ENCODE measurements at regions of chr7 and their contacts with region 1.

Region 1: DNA sequence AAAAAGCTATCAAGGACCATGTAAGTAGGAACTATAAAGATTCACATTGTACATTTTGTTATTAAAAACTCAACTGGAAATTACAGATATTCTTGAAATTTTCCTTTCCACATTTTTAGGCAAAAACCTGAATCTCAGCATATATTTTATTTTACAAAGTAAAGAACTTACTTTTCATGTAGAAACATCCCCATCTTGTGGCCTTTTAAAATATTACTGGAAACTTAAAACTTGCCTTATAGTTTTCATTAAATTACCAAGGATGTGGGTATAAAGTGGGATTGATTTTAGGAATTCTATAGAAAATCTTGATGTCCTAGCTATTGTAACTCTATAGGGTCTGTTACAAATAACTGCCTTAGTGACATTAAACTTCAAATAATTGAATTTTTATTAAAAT is 10.6 kb downstream of the DBF4 start:
- DNase-seq: no peak
- ATAC-seq: peak in 2 of 4 donors; percentile 46 to 63
- H3K4me3 ChIP-seq: no peak overlapping the region
- H3K27ac ChIP-seq: no peak overlapping the region
- H3K4me1 ChIP-seq: no peaks in the 10 kb centered on the region
- H3K27me3 ChIP-seq: no peaks in the 10 kb centered on the region
- CTCF ChIP-seq: peak in 3 of 4 donors; percentile 12 to 24 (median 19)

Region 2: GRCh38 chr7:87287738-87288341 is 599.0 kb before region 1 on chr7:
- intact Hi-C with region 1: no loop called
- DNase-seq: no peak
- ATAC-seq: no peak
- H3K4me3 ChIP-seq: no peak overlapping the region
- H3K27ac ChIP-seq: no peak overlapping the region
- H3K4me1 ChIP-seq: no peaks in the 10 kb centered on the region
- H3K27me3 ChIP-seq: no peaks in the 10 kb centered on the region
- CTCF ChIP-seq: no peak

Region 3: DNA sequence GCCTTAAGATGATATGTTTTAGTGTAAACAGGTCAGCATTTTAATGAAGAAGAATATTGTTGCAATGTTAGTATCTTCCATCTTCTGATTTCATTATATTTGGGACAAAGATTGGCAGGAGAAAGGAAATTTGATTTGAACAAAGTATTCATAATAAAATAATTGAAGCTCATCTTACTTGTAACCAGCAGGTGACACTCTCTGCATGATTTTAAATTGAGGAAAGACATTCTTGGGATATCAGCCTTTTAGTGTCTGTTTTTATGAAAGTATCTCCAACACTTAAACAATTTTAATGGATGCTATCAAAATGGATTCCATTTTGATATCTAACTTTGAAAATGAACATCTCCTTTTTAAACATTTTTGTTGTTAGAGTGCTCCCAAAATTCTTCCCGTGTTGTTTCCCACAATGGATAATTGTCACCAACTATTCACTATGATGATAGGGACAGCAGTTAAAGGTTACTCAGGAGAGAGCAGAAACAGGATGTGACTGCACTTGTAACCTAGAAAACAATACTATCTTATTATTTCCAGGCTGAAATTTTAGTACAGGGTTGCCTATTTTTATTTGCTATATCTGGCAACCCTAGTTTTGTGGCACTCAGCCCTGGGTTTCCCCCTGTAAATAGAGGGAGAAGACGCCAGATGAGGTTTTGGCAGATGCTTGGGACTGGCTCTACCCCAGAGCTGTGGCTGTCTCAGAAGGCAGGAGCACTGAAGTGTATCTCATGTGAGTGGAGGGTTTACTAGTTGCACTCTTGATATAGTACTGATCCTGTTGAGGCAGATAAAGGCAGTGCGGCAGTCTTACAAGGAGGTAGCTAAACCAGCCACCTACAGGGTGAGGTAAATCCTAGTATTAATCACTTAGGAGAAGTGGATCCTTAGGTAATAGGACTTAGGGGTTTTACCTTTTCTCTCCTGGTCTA is 380.4 kb before region 1 on chr7:
- intact Hi-C with region 1: loop called in 1 of 3 experiments (anchors 10 kb)
- DNase-seq: no peak
- ATAC-seq: peak in 3 of 4 donors; percentile 32 to 57 (median 51)
- H3K4me3 ChIP-seq: no peak overlapping the region
- H3K27ac ChIP-seq: no peak overlapping the region
- H3K4me1 ChIP-seq: no peaks in the 10 kb centered on the region
- H3K27me3 ChIP-seq: no peaks in the 10 kb centered on the region
- CTCF ChIP-seq: peak in 3 of 4 donors; percentile 15 to 22 (median 20)

Region 4: GRCh38 chr7:87628780-87629569 is 257.9 kb before region 1 on chr7:
- intact Hi-C with region 1: no loop called
- DNase-seq: peak in 5 of 6 donors; percentile 17 to 77 (median 30)
- ATAC-seq: peak; percentile 47 to 66 (median 53)
- H3K4me3 ChIP-seq: peak overlapping the region; percentile 44 to 64 (median 54)
- H3K27ac ChIP-seq: no peak overlapping the region
- H3K4me1 ChIP-seq: peaks cover 0 to 5% (median 0%) of the 10 kb centered on the region in 3 donors
- H3K27me3 ChIP-seq: no peaks in the 10 kb centered on the region
- CTCF ChIP-seq: no peak

Region 5: DNA sequence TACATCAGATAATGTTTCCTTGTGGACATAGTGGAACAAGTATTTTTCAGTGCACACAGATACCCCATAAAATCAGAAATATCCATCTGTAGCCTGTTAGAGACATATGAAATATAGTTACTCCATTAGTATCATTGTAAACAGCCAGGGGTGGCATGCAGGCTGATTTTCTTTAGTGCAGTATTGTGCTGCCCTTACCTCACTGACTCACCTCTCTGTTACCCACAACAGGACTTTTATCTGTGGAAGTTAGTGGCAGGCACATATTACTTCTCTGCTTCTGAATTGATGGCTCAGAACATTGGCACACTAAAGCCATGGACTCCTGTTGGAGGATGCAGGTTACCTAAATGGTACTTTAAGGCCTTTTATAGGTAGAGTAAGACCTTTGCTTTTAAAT is 80.7 kb before region 1 on chr7:
- intact Hi-C with region 1: loop called in 1 of 3 experiments (anchors 10 kb)
- DNase-seq: no peak
- ATAC-seq: no peak
- H3K4me3 ChIP-seq: no peak overlapping the region
- H3K27ac ChIP-seq: no peak overlapping the region
- H3K4me1 ChIP-seq: no peaks in the 10 kb centered on the region
- H3K27me3 ChIP-seq: no peaks in the 10 kb centered on the region
- CTCF ChIP-seq: no peak